Activated CD4-positive, alpha-beta T cell treated with anti-CD3 and anti-CD28 coated beads, Interleukin-2, amount 10 ng/mL, durations not matched to agents 24 days and 14 days (primary cell): ENCODE measurements at regions of chr2 and their contacts with region 1.

Region 1: DNA sequence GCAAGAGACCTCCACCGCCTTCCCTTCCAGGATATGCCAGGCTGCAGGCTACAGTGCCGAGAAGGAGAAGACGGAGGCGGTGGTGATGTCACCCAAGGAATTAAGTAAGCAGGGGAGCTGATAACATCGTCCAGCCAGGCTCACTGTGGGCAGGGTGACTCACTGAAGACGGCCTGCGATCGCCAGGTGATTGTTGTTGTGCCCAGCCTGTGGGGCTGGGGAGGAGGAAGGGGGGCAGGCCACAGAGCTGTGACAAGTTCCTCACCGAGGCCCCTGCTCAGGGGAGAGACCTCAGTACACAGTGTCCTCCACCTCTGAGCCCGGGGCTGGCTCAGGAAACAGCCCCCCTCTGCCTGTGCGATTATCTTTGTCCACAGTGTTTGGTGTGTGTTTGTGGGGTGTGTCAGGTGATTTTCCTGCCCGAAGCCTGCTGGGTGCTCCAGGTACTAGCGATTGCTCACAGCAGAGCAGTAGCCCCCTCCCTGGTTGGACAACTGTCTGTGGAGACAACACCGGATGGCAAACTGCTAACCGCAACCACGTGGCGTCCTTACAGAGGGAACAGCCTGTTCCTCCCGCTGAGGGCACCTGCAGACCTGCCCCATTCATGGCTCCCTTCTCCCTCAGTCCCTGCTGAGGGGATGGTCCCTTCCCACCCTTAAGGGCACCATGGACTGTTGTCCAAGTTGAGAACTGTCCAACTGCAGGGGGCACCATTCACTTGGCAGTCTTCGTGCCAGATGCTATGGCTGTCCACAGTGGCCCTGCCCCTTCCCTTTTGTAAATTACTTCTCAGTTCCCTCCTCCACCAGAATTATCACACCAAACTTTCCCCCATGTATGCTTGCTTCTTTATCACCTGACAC is 95.1 kb downstream of the ZFP36L2 start:
- DNase-seq: peak; percentile 93
- H3K4me3 Mint-ChIP-seq: peak overlapping the region; percentile 64
- H3K27ac Mint-ChIP-seq: peak overlapping the region; percentile 84
- H3K4me1 Mint-ChIP-seq: peaks cover 78% of the 10 kb centered on the region
- H3K27me3 Mint-ChIP-seq: no peaks in the 10 kb centered on the region

Region 2: GRCh38 chr2:42859006-42859552 is 272.2 kb before region 1 on chr2:
- intact Hi-C with region 1: loop called (anchors 2 kb)
- DNase-seq: peak; percentile 91
- H3K4me3 Mint-ChIP-seq: no peak overlapping the region
- H3K27ac Mint-ChIP-seq: no peak overlapping the region
- H3K4me1 Mint-ChIP-seq: peaks cover 2% of the 10 kb centered on the region
- H3K27me3 Mint-ChIP-seq: no peaks in the 10 kb centered on the region

Region 3: DNA sequence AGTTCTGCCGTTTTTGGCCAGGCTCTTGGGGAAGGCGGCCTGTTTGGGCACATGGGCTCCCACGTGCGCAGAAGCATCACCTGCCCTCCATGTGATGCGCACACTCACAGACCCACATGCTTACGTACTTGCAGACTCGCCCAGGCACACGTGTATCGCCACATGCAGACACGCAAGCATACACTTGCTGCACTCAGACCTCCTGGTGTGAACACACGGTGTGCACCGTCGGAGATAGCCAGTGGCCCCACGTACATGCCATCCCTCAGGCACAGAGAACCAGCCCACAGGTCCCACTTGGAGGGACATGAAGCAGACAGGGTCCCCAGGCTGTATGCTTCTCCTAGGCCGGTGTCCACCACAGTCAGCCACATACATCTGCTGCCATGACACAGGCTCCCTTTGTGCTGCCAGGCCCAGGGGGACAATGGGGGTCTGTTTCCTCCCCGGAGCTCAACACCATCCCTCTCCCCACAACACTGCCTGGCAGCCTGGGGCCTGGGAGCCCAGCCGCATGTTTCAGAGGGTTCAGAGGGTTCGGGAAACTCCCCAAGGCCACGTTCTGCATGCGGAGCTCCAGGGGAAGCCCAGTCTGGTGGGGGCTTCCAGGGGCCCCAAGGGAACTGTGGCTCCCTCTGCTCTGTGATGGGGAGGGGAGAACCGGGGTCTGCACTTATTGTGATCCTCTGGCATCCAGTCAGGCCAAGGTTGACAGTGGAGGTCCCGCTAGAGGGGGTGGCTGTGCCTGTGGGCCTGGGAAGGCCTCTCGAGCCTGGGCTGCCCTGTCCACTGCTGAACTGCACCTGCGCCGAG is 130.8 kb before region 1 on chr2:
- intact Hi-C with region 1: no loop called
- DNase-seq: no peak
- H3K4me3 Mint-ChIP-seq: no peak overlapping the region
- H3K27ac Mint-ChIP-seq: no peak overlapping the region
- H3K4me1 Mint-ChIP-seq: no peaks in the 10 kb centered on the region
- H3K27me3 Mint-ChIP-seq: peaks cover 15% of the 10 kb centered on the region

Region 4: DNA sequence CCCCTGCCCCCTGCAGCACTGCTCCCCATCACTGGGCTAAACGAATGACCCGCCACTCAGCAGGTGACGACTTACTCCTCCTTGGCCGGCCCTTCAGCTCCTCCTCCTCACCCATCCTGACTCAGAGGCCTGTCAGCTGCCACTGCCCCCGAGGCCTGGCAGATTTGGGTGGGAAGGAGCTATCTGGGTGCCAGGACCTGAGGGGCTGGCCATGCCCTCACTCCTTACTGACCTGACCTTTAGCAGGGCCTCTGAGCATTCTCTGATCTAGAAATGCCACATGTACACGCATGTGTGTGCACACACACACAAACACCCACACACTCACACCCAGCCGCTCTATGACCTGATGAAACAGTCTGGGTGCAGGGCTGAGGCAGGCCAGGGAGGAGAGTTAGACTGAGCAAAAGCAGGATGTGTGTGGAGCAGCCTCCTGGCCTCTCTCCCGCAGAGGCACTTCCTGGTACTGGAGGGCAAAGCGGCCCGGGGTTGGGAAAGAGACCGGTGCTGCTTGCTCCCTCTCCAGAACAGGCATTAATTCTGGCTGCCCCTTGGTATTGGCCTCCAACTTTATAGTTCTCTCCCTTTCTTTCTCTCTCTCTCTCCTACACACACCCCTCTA is 27.1 kb after region 1 on chr2:
- intact Hi-C with region 1: loop called (anchors 1 kb)
- DNase-seq: peak; percentile 89
- H3K4me3 Mint-ChIP-seq: peak overlapping the region; percentile 78
- H3K27ac Mint-ChIP-seq: peak overlapping the region; percentile 98
- H3K4me1 Mint-ChIP-seq: peaks cover 56% of the 10 kb centered on the region
- H3K27me3 Mint-ChIP-seq: no peaks in the 10 kb centered on the region

Region 5: GRCh38 chr2:43219383-43220228 is 88.3 kb after region 1 on chr2:
- intact Hi-C with region 1: loop called (anchors 1 kb)
- DNase-seq: peak; percentile 95
- H3K4me3 Mint-ChIP-seq: peak overlapping the region; percentile 84
- H3K27ac Mint-ChIP-seq: peak overlapping the region; percentile 96
- H3K4me1 Mint-ChIP-seq: peaks cover 48% of the 10 kb centered on the region
- H3K27me3 Mint-ChIP-seq: peaks cover 2% of the 10 kb centered on the region

Region 6: DNA sequence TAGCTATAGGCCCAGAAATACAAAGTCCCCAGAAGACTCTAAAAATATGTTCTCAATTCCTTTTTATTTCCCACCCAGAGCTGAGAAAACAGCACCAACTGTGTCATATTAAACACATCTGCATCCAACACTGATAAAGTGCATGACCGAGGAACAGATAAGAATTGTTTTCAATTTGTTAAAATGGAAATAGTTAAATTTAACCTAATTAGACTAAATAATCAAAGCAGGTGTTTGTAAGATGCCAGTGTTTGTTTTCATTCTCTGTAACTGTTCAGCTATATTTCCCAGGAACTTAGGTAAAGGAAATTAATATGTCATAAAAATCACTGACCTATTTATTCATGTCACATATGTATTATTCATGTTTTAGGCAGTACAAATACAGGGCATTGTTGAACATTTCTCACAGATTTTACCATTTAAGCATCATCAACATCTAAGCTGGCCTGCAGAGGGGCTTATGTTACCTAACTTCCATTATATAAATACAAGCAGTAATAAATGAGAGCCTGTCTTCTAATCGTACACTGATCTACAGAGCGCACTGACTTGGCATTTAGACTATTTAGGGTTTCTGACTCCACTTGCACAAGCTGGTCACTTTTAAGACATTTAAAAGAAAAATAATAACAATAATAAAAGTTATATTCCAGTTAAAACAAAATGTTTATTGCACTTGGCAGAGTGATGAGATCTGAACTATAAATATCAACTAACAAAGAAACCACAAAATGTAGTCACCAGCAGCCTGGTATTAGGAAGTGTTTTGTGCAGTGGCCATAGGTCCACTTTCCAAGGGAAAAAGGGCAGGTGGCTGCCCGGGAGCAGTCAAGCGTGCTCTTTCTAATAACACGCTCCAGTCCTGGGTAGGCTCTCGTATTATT is 181.7 kb after region 1 on chr2:
- intact Hi-C with region 1: no loop called
- DNase-seq: no peak
- H3K4me3 Mint-ChIP-seq: no peak overlapping the region
- H3K27ac Mint-ChIP-seq: no peak overlapping the region
- H3K4me1 Mint-ChIP-seq: peaks cover 8% of the 10 kb centered on the region
- H3K27me3 Mint-ChIP-seq: no peaks in the 10 kb centered on the region

Region 7: DNA sequence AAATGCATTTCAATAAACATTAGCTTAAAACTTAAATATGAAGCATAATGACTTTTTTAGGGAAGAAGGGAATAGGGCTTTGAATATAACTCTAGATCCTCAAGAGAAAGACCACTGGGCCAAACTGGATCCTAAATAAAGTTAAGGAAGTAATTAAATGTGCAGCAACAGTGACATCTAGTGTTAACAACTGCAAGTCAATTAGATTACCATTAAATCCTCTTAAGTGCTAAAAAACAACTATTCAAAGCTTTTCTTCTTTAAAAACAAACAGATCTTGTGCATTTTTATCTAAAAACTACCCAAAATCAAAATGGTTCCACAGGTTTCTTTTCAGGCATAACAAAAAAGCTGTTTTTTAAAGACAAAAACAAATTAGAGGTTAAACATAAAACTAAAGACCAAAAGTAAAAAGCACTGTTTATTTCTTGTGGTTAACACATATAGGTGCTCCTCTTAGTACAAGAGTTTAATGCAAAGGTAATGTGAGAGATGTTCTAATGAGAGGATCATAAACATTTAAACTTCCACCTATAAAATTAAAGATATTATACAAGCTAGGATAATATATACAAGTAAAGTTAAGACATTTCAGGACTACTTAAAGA is 353.2 kb after region 1 on chr2:
- intact Hi-C with region 1: loop called (anchors 1 kb)
- DNase-seq: peak; percentile 65
- H3K4me3 Mint-ChIP-seq: no peak overlapping the region
- H3K27ac Mint-ChIP-seq: no peak overlapping the region
- H3K4me1 Mint-ChIP-seq: peaks cover 8% of the 10 kb centered on the region
- H3K27me3 Mint-ChIP-seq: no peaks in the 10 kb centered on the region